ENCODE measurements at regions of chr19 and their contacts with region 1.

Region 1: GRCh38 chr19:41575998-41576397 is at the start of gene CEACAM21:
- DNase-seq: peak; percentile 81
- ATAC-seq: peak; percentile 100
- H3K4me3 Mint-ChIP-seq: peak within 1 kb of the TSS; percentile 73
- H3K27ac Mint-ChIP-seq: peak within 1 kb of the TSS; percentile 81
- H3K4me1 Mint-ChIP-seq: peaks cover 20% of the 10 kb centered on the region
- H3K27me3 Mint-ChIP-seq: no peaks in the 10 kb centered on the region
- total RNA-seq, gene CEACAM21: 54.6 to 57.1 TPM

Region 2: DNA sequence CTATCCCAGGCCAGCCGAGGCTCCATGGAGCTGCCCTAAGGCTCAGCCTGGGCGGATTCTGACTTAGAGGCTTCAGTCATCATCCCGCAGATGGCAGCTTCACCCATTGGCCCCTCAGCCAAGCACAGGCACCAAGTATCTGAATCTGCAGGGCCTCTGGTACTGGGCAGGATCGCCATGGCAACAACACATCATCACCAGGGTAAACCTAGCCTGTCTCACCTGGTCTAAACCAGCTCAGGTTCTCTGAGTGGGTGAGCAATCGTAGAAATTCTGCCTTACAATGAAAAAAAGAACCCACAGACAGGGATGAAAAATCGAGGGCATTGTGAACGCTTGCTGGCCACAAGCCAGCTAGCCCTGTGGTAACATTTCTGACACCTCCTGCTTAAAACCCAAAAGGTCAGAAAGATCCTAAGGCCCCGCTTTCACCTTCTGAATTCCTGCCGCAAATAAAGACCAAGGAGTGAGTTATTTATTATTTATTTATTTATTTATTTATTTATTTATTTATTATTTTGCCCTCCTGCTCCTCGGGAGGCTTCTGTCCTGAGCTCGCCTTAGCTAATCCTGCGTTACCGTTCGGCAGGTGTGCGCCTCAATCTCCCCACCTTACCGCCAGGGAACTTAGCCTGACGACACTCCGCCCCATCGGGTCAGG is 12.0 kb before region 1 on chr19:
- CTCF ChIA-PET with region 1: interaction called, 59 read pairs
- DNase-seq: no peak
- ATAC-seq: peak; percentile 52
- H3K4me3 Mint-ChIP-seq: no peak overlapping the region
- H3K27ac Mint-ChIP-seq: no peak overlapping the region
- H3K4me1 Mint-ChIP-seq: peaks cover 52% of the 10 kb centered on the region
- H3K27me3 Mint-ChIP-seq: no peaks in the 10 kb centered on the region

Region 3: GRCh38 chr19:41597600-41598041 is 21.6 kb after region 1 on chr19:
- CTCF ChIA-PET with region 1: interaction called, 61 read pairs
- DNase-seq: peak; percentile 87
- ATAC-seq: peak; percentile 75
- H3K4me3 Mint-ChIP-seq: no peak overlapping the region
- H3K27ac Mint-ChIP-seq: no peak overlapping the region
- H3K4me1 Mint-ChIP-seq: peaks cover 17% of the 10 kb centered on the region
- H3K27me3 Mint-ChIP-seq: peaks cover 48% of the 10 kb centered on the region

Region 4: GRCh38 chr19:41657157-41657556 is 81.2 kb after region 1 on chr19:
- CTCF ChIA-PET with region 1: no interaction called
- DNase-seq: no peak
- ATAC-seq: no peak
- H3K4me3 Mint-ChIP-seq: no peak overlapping the region
- H3K27ac Mint-ChIP-seq: no peak overlapping the region
- H3K4me1 Mint-ChIP-seq: peaks cover 4% of the 10 kb centered on the region
- H3K27me3 Mint-ChIP-seq: peaks cover 79% of the 10 kb centered on the region